ENCODE measurements at regions of chr2 and their contacts with region 1.

Region 1: GRCh38 chr2:204325468-204325867 is 219.8 kb upstream of the PARD3B start:
- DNase-seq: peak; percentile 87
- ATAC-seq: peak; percentile 92
- H3K4me3 ChIP-seq: no peak overlapping the region
- H3K27ac ChIP-seq: no peak overlapping the region
- H3K4me1 ChIP-seq: peaks cover 3% of the 10 kb centered on the region
- H3K27me3 ChIP-seq: no peaks in the 10 kb centered on the region
- CTCF ChIP-seq: peak; percentile 88
- POLR2A ChIP-seq: 0 out of 2 replicates have a peak, but pooled peaks have one; percentile 38
- RAD21 ChIP-seq: peak; percentile 96

Region 2: DNA sequence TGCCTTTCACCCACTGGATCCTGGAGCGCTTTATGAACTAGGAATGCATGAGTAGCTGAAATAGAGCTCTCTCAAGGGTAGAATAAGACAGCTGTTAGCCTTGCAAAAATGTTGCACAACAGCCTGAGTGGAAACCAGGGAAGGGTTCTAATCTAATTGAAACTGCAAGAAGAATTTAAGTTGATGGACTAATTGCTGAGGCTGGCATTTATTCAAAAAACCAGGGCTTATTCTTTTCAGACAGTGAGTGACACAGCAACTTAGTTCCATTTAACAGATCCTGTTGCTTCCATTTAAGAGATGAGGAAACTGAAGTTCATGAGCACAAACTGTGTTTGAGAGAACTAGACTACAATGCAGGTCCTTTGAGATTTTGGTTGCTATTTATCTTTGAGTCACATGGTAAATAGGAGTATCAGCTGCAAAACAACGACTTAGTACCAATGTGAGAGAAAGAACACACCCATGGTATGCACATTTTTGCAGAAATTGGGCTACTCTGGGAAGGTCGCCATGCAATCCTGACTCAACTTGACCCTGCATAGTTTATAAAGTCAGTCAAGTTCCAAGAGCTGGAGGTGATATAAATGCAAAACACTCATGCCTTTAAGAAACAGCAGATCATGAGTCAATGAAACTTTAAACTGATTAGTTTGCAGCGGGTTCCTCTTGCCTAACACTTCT is 143.4 kb after region 1 on chr2:
- CTCF ChIA-PET with region 1: no interaction called
- POLR2A ChIA-PET with region 1: no interaction called
- dilution Hi-C with region 1: no loop called
- in situ Hi-C with region 1: no loop called
- intact Hi-C with region 1: loop called (anchors 5 kb)
- DNase-seq: peak; percentile 86
- ATAC-seq: peak; percentile 93
- H3K4me3 ChIP-seq: no peak overlapping the region
- H3K27ac ChIP-seq: peak overlapping the region; percentile 73; the same call in 1 of the 2 replicates
- H3K4me1 ChIP-seq: peaks cover 11% of the 10 kb centered on the region
- H3K27me3 ChIP-seq: no peaks in the 10 kb centered on the region
- CTCF ChIP-seq: no peak
- POLR2A ChIP-seq: no peak
- RAD21 ChIP-seq: no peak

Region 3: GRCh38 chr2:204625167-204625566 is 299.7 kb after region 1 on chr2:
- CTCF ChIA-PET with region 1: no interaction called
- POLR2A ChIA-PET with region 1: no interaction called
- dilution Hi-C with region 1: no loop called
- in situ Hi-C with region 1: no loop called
- intact Hi-C with region 1: loop called (anchors 10 kb)
- DNase-seq: no peak
- ATAC-seq: no peak
- H3K4me3 ChIP-seq: no peak overlapping the region
- H3K27ac ChIP-seq: no peak overlapping the region
- H3K4me1 ChIP-seq: no peaks in the 10 kb centered on the region
- H3K27me3 ChIP-seq: no peaks in the 10 kb centered on the region
- CTCF ChIP-seq: 0 out of 2 replicates have a peak, but pooled peaks have one; percentile 19
- POLR2A ChIP-seq: no peak
- RAD21 ChIP-seq: peak; percentile 31; the same call in 1 of the 2 replicates

Region 4: GRCh38 chr2:204842661-204843485 is 517.4 kb after region 1 on chr2:
- CTCF ChIA-PET with region 1: no interaction called
- POLR2A ChIA-PET with region 1: no interaction called
- dilution Hi-C with region 1: no loop called
- in situ Hi-C with region 1: no loop called
- intact Hi-C with region 1: loop called (anchors 2 kb)
- DNase-seq: peak; percentile 96
- ATAC-seq: peak; percentile 99
- H3K4me3 ChIP-seq: no peak overlapping the region
- H3K27ac ChIP-seq: peak overlapping the region; percentile 76; the same call in 1 of the 2 replicates
- H3K4me1 ChIP-seq: peaks cover 5% of the 10 kb centered on the region
- H3K27me3 ChIP-seq: no peaks in the 10 kb centered on the region
- CTCF ChIP-seq: no peak
- POLR2A ChIP-seq: no peak
- RAD21 ChIP-seq: no peak

Region 5: GRCh38 chr2:204871231-204871953 is 545.9 kb after region 1 on chr2:
- CTCF ChIA-PET with region 1: no interaction called
- POLR2A ChIA-PET with region 1: no interaction called
- dilution Hi-C with region 1: no loop called
- in situ Hi-C with region 1: loop called (anchors 25 kb)
- intact Hi-C with region 1: no loop called
- DNase-seq: peak; percentile 69
- ATAC-seq: peak; percentile 64; the same call in 1 of the 2 replicates
- H3K4me3 ChIP-seq: no peak overlapping the region
- H3K27ac ChIP-seq: no peak overlapping the region
- H3K4me1 ChIP-seq: peaks cover 4% of the 10 kb centered on the region
- H3K27me3 ChIP-seq: no peaks in the 10 kb centered on the region
- CTCF ChIP-seq: peak; percentile 61
- POLR2A ChIP-seq: no peak
- RAD21 ChIP-seq: peak; percentile 65

Region 6: DNA sequence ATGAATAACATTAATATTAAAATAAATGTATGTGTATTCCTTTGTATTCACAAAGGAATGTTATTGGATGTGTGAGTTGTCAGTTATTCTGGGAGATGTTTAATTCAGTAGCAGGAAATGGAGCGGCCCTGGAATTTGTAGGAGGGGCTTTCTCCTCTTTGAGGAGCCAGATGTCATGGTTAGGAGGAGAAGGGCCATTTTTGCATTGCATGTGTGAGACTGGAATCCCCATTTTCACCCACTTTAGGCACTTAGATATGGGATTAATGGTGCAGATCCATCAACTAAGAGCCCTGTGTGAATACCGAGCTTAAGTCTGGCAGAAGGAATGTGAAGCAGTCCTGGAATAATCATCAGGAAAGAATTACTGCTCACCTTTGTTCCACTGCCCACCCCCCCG is 659.0 kb after region 1 on chr2:
- CTCF ChIA-PET with region 1: no interaction called
- POLR2A ChIA-PET with region 1: no interaction called
- dilution Hi-C with region 1: no loop called
- in situ Hi-C with region 1: no loop called
- intact Hi-C with region 1: no loop called
- DNase-seq: peak; percentile 35
- ATAC-seq: no peak
- H3K4me3 ChIP-seq: no peak overlapping the region
- H3K27ac ChIP-seq: no peak overlapping the region
- H3K4me1 ChIP-seq: peaks cover 3% of the 10 kb centered on the region; the same call in 1 of the 2 replicates
- H3K27me3 ChIP-seq: no peaks in the 10 kb centered on the region
- CTCF ChIP-seq: no peak
- POLR2A ChIP-seq: no peak
- RAD21 ChIP-seq: no peak

Region 7: DNA sequence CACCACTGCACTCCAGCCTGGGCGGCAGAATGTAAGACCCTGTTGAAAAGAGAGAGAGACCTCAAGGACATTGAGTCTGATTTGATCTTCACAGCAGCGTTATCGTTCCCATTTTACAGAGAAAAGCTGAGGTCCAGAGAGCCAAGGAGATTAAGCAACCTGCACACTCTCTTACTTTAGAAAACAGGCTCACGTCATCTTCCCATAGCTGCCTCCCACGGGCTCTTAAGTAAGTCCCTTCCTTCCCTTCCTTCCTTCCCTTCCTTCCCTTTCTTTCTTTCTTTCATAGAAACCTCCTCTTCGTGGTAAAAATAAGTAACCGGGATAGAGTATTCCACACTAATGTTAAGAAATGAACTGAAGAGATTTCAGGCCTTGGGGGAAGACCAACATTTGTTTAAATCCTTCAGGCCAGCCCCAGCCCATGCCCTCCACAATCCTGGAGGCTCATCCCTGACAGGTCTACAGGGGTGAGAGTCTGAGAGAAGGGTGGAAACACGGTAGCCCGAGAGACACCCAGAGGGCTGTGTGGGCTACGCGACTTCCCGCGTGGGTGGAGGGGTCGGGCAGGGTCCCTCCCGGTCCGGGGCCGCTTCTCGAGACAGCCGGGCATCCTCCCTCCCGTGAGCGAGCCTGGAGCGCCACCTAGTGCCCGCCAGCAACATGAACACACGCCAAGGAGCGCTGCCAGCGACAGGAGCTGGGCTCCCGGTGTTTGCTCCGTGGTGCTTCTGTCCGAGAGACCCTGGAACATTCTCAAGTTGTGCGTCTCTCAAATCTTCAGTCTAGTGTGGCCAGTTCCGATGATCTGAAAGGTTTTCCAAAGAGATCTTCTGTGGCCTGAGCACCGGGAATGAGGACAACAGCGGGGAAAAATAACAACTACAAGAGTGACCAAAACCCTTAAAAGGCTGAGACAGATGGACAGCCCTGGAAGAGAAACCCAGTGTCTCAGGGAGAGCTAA is 1600.2 kb after region 1 on chr2:
- CTCF ChIA-PET with region 1: no interaction called
- POLR2A ChIA-PET with region 1: no interaction called
- dilution Hi-C with region 1: no loop called
- in situ Hi-C with region 1: no loop called
- intact Hi-C with region 1: loop called (anchors 5 kb)
- DNase-seq: peak; percentile 51
- ATAC-seq: peak; percentile 97
- H3K4me3 ChIP-seq: peak overlapping the region; percentile 12; the same call in 1 of the 2 replicates
- H3K27ac ChIP-seq: no peak overlapping the region
- H3K4me1 ChIP-seq: no peaks in the 10 kb centered on the region; the same call in 1 of the 2 replicates
- H3K27me3 ChIP-seq: peaks cover 42% of the 10 kb centered on the region
- CTCF ChIP-seq: peak; percentile 91
- POLR2A ChIP-seq: no peak
- RAD21 ChIP-seq: peak; percentile 93